ENCODE measurements at regions of chr18 and their contacts with region 1.

Region 1: GRCh38 chr18:3983351-3983969 is 471.6 kb downstream of the DLGAP1 start:
- DNase-seq: no peak
- ATAC-seq: no peak
- H3K4me3 Mint-ChIP-seq: no peak overlapping the region
- H3K27ac Mint-ChIP-seq: no peak overlapping the region
- H3K4me1 Mint-ChIP-seq: peaks cover 9% of the 10 kb centered on the region
- H3K27me3 Mint-ChIP-seq: peaks cover 1% of the 10 kb centered on the region
- CTCF ChIP-seq: no peak

Region 2: GRCh38 chr18:3903337-3903736 is 80.1 kb before region 1 on chr18:
- CTCF ChIA-PET with region 1: no interaction called
- POLR2A ChIA-PET with region 1: no interaction called
- intact Hi-C with region 1: no loop called
- DNase-seq: no peak
- ATAC-seq: no peak
- H3K4me3 Mint-ChIP-seq: no peak overlapping the region
- H3K27ac Mint-ChIP-seq: no peak overlapping the region
- H3K4me1 Mint-ChIP-seq: no peaks in the 10 kb centered on the region
- H3K27me3 Mint-ChIP-seq: peaks cover 5% of the 10 kb centered on the region
- CTCF ChIP-seq: no peak

Region 3: DNA sequence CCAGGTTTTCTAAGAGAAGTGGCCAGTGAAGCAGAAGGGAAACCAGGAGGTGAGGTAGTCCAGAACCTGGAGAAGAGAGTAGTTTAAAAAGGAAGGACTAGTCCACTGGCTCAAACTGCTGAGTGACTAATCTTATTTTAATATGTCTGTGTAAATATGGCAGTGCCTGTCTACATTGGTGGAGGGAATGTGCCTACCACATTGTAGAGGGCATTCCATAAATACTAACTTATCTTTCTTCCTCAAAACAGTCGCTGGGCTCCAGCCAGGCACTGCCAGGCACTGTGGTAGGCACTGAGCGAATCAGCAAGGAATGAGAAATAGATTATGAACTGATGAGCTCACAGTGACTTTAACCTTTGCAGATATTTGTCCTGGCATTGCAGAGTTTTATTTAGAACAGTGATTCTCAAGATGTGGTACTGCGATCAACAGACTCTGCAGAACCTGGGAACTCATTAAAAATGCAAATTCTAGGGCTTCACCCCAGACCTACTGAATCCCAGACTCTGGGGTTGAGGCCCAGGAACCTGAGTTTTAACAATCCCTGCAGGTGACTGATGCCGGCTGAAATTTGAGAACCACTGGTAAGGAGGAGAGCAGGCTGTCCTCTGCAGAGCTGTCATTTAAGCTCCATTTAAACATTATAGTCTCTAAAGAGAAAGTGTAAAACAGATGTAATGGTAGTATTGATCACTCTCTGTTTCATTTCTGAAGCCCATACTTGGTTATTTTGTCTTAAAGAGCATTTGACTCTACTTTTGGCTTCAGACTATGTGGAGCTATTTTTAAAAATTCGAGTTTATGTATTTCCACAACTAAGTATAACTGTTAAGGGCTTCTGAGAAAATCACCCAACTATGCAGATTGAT is 16.2 kb before region 1 on chr18:
- CTCF ChIA-PET with region 1: no interaction called
- POLR2A ChIA-PET with region 1: no interaction called
- intact Hi-C with region 1: no loop called
- DNase-seq: no peak
- ATAC-seq: no peak
- H3K4me3 Mint-ChIP-seq: no peak overlapping the region
- H3K27ac Mint-ChIP-seq: no peak overlapping the region
- H3K4me1 Mint-ChIP-seq: no peaks in the 10 kb centered on the region
- H3K27me3 Mint-ChIP-seq: peaks cover 3% of the 10 kb centered on the region
- CTCF ChIP-seq: no peak

Region 4: DNA sequence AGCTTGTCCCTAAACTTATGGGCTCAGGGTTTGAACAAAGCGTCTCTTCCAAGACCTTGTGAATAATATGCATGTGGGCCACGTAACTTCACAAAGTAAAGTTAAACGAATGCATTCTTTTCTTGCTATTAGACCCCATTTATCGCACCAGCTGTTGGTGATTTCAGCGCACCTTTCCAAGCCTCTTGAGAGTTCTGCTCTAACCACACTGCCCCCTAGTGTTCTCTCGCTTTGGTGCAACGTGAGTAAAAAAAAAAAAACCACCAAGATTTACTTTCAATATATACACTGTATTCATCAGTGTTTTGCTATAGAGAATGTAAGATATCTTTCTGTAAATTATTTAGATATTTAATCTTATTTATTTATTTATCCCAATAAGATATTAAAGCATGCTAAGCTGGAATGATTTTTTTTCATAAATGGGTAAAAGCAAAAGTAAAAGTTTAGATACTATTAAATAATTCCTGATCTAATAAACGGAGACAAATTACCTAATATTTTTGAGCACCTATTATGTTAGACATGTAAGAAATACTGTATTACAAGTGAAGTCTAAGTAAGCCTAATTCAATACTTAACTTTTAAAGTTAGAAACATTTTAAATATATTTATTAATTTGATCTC is 12.1 kb after region 1 on chr18:
- CTCF ChIA-PET with region 1: interaction called, 37 read pairs
- POLR2A ChIA-PET with region 1: interaction called, 3 read pairs
- intact Hi-C with region 1: no loop called
- DNase-seq: peak; percentile 77
- ATAC-seq: peak; percentile 79
- H3K4me3 Mint-ChIP-seq: no peak overlapping the region
- H3K27ac Mint-ChIP-seq: no peak overlapping the region
- H3K4me1 Mint-ChIP-seq: no peaks in the 10 kb centered on the region
- H3K27me3 Mint-ChIP-seq: peaks cover 5% of the 10 kb centered on the region
- CTCF ChIP-seq: peak; percentile 88

Measured in activated CD8-positive, alpha-beta T cell treated with anti-CD3 and anti-CD28 coated beads for 36 hours (primary cell).